Sigmoid colon (tissue), 7 donors: ENCODE measurements at regions of chr18 and their contacts with region 1.

Region 1: GRCh38 chr18:24734058-24734457 is 273.6 kb downstream of the HRH4 start:
- DNase-seq: no peak
- H3K4me3 ChIP-seq: no peak overlapping the region
- H3K27ac ChIP-seq: no peak overlapping the region
- H3K4me1 ChIP-seq: no peaks in the 10 kb centered on the region
- H3K27me3 ChIP-seq: no peaks in the 10 kb centered on the region
- CTCF ChIP-seq: no peak
- EP300 ChIP-seq: no peak
- POLR2A ChIP-seq: no peak

Region 2: GRCh38 chr18:24543805-24544498 is 190.1 kb before region 1 on chr18:
- intact Hi-C with region 1: loop called (anchors 10 kb)
- DNase-seq: no peak
- H3K4me3 ChIP-seq: no peak overlapping the region
- H3K27ac ChIP-seq: no peak overlapping the region
- H3K4me1 ChIP-seq: no peaks in the 10 kb centered on the region
- H3K27me3 ChIP-seq: no peaks in the 10 kb centered on the region
- CTCF ChIP-seq: no peak
- EP300 ChIP-seq: no peak
- POLR2A ChIP-seq: no peak